ENCODE measurements at regions of chr10 and their contacts with region 1.

Region 1: GRCh38 chr10:101297901-101298486 is 56.0 kb upstream of the BTRC start:
- ATAC-seq: peak; percentile 34 to 88 (median 51)
- H3K4me3 ChIP-seq: no peak overlapping the region
- H3K27ac ChIP-seq: no peak overlapping the region
- H3K4me1 ChIP-seq: peaks cover 27 to 44% of the 10 kb centered on the region in 2 donors

Region 2: DNA sequence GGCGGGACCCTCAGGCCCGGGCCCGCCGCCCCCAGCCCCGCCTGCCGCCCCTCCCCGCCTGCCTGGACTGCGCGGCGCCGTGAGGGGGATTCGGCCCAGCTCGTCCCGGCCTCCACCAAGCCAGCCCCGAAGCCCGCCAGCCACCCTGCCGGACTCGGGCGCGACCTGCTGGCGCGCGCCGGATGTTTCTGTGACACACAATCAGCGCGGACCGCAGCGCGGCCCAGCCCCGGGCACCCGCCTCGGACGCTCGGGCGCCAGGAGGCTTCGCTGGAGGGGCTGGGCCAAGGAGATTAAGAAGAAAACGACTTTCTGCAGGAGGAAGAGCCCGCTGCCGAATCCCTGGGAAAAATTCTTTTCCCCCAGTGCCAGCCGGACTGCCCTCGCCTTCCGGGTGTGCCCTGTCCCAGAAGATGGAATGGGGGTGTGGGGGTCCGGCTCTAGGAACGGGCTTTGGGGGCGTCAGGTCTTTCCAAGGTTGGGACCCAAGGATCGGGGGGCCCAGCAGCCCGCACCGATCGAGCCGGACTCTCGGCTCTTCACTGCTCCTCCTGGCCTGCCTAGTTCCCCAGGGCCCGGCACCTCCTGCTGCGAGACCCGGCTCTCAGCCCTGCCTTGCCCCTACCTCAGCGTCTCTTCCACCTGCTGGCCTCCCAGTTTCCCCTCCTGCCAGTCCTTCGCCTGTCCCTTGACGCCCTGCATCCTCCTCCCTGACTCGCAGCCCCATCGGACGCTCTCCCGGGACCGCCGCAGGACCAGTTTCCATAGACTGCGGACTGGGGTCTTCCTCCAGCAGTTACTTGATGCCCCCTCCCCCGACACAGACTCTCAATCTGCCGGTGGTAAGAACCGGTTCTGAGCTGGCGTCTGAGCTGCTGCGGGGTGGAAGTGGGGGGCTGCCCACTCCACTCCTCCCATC is 469.9 kb before region 1 on chr10:
- in situ Hi-C with region 1: no loop called
- ATAC-seq: peak; percentile 69 to 76 (median 72)
- H3K4me3 ChIP-seq: peak overlapping the region in 4 of 5 donors; percentile 5 to 54 (median 51)
- H3K27ac ChIP-seq: no peak overlapping the region
- H3K4me1 ChIP-seq: peaks cover 14 to 18% of the 10 kb centered on the region in 2 donors

Region 3: GRCh38 chr10:101161494-101162299 is 136.3 kb before region 1 on chr10:
- in situ Hi-C with region 1: loop called in 1 of 9 experiments (anchors 25 kb)
- ATAC-seq: peak; percentile 30 to 95 (median 78)
- H3K4me3 ChIP-seq: no peak overlapping the region
- H3K27ac ChIP-seq: no peak overlapping the region
- H3K4me1 ChIP-seq: no peaks in the 10 kb centered on the region

Region 4: DNA sequence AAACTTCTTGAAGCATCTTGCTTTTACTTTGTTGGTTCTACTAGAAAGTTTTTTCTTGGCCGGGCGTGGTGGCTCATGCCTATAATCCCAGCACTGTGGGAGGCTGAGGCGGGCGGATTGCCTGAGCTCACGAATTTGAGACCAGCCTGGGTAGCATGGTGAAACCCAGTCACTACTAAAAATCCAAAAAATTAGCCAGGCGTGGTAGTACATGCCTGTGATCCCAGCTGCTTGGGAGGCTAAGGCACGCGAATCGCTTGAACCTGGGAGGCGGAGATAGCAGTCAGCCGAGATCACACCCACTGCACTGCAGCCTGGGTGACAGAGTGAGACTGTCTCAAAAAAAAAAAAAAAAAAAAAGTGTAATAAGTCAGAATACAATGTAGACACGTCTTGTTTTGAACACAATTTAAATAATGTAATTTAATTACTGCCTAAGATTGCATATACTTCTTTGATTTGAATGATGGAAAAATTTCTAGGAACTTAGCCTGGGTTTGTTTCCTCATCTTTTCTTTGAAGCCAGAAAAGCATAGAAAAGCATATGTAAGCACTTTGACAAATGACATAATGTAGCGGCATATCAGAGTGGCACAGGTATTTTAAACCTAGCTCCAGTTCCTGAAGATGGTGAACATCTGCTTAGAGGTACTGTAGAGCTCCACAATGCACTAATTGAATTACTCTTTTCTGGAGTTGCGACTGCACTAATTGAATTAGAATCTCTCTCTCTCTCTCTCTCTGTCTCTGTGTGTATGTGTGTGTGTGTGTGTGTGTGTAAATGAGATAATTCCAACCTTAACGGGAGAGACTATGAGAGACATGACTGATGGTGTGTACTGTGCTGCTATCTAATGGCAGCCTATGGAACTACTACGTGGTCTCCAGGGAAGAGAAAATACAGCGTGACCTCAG is 143.8 kb after region 1 on chr10:
- in situ Hi-C with region 1: loop called in 3 of 9 experiments (anchors 10 to 25 kb)
- ATAC-seq: peak; percentile 85 to 95 (median 90)
- H3K4me3 ChIP-seq: no peak overlapping the region
- H3K27ac ChIP-seq: no peak overlapping the region
- H3K4me1 ChIP-seq: peaks cover 19 to 54% of the 10 kb centered on the region in 2 donors

Region 5: GRCh38 chr10:101569838-101570766 is 272.1 kb after region 1 on chr10:
- in situ Hi-C with region 1: loop called in 3 of 9 experiments (anchors 25 kb)
- ATAC-seq: peak; percentile 43 to 80 (median 48)
- H3K4me3 ChIP-seq: peak overlapping the region; percentile 29 to 51 (median 37)
- H3K27ac ChIP-seq: peak overlapping the region; percentile 24 to 40
- H3K4me1 ChIP-seq: peaks cover 26 to 41% of the 10 kb centered on the region in 2 donors